Naive thymus-derived CD4-positive, alpha-beta T cell (primary cell): ENCODE measurements at regions of chr10 and their contacts with region 1.

Region 1: DNA sequence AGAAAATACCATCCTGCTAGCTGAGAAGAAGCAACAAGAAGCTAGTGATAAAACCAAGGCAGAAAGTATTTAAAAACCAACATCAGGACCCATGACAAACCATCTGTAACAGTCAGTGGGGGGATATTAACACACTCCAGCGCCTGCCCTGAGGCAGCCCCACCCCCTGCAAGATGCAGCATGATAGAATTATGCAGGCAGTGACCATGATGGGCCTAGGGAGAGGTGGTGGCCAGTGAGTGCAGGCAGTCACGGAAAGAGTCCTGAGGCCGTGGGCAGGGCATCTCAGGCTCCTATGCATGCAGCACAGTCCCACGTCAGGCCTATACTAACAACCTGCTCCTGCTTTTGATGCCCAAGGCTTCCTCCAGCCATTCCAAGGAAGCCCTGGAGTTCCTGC is 686.9 kb downstream of the GRID1 start:
- DNase-seq: no peak
- ATAC-seq: no peak
- H3K4me3 ChIP-seq: no peak overlapping the region
- H3K4me3 Mint-ChIP-seq: no peak overlapping the region
- H3K27ac ChIP-seq: no peak overlapping the region
- H3K27ac Mint-ChIP-seq: no peak overlapping the region
- H3K4me1 ChIP-seq: no peaks in the 10 kb centered on the region
- H3K4me1 Mint-ChIP-seq: no peaks in the 10 kb centered on the region
- H3K27me3 ChIP-seq: peaks cover 0 to 2% of the 10 kb centered on the region in 2 donors
- H3K27me3 Mint-ChIP-seq: peaks cover 0 to 6% (median under 1%) of the 10 kb centered on the region in 5 donors

Region 2: GRCh38 chr10:85565381-85565780 is 114.3 kb before region 1 on chr10:
- CTCF ChIA-PET with region 1: no interaction called
- POLR2A ChIA-PET with region 1: no interaction called
- intact Hi-C with region 1: loop called in 1 of 2 experiments (anchors 10 kb)
- DNase-seq: no peak
- ATAC-seq: no peak
- H3K4me3 ChIP-seq: no peak overlapping the region
- H3K4me3 Mint-ChIP-seq: no peak overlapping the region
- H3K27ac ChIP-seq: no peak overlapping the region
- H3K27ac Mint-ChIP-seq: no peak overlapping the region
- H3K4me1 ChIP-seq: no peaks in the 10 kb centered on the region
- H3K4me1 Mint-ChIP-seq: no peaks in the 10 kb centered on the region
- H3K27me3 ChIP-seq: no peaks in the 10 kb centered on the region
- H3K27me3 Mint-ChIP-seq: peaks cover 0 to 8% (median 5%) of the 10 kb centered on the region in 5 donors